ENCODE measurements at regions of chr11 and their contacts with region 1.

Region 1: GRCh38 chr11:62705880-62706849 is 1.1 kb downstream of the BSCL2 start:
- DNase-seq: peak; percentile 97
- ATAC-seq: peak; percentile 77
- H3K4me3 Mint-ChIP-seq: peak overlapping the region; percentile 84
- H3K27ac Mint-ChIP-seq: peak overlapping the region; percentile 77
- H3K4me1 Mint-ChIP-seq: peaks cover 43% of the 10 kb centered on the region
- H3K27me3 Mint-ChIP-seq: no peaks in the 10 kb centered on the region
- CTCF ChIP-seq: no peak

Region 2: GRCh38 chr11:62280452-62280851 is 425.7 kb before region 1 on chr11:
- CTCF ChIA-PET with region 1: no interaction called
- POLR2A ChIA-PET with region 1: no interaction called
- intact Hi-C with region 1: no loop called
- DNase-seq: no peak
- ATAC-seq: no peak
- H3K4me3 Mint-ChIP-seq: no peak overlapping the region
- H3K27ac Mint-ChIP-seq: no peak overlapping the region
- H3K4me1 Mint-ChIP-seq: no peaks in the 10 kb centered on the region
- H3K27me3 Mint-ChIP-seq: peaks cover 4% of the 10 kb centered on the region
- CTCF ChIP-seq: no peak

Region 3: DNA sequence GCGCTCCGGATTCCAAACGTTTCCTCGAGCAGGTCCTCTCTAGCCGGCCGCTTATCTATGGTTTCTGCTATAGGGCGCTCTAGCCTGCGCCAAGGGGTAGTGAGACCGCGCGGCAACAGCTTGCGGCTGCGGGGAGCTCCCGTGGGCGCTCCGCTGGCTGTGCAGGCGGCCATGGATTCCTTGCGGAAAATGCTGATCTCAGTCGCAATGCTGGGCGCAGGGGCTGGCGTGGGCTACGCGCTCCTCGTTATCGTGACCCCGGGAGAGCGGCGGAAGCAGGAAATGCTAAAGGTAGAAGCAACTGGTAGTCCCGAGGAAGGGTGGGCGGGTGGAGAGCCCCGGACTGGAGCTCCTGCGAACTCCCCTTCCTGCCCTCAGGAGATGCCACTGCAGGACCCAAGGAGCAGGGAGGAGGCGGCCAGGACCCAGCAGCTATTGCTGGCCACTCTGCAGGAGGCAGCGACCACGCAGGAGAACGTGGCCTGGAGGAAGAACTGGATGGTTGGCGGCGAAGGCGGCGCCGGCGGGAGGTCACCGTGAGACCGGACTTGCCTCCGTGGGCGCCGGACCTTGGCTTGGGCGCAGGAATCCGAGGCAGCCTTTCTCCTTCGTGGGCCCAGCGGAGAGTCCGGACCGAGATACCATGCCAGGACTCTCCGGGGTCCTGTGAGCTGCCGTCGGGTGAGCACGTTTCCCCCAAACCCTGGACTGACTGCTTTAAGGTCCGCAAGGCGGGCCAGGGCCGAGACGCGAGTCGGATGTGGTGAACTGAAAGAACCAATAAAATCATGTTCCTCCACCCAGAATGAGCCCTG is 34.4 kb before region 1 on chr11 and contains the starts of genes LBHD1 and UQCC3:
- CTCF ChIA-PET with region 1: interaction called, 3 read pairs
- POLR2A ChIA-PET with region 1: interaction called, 13 read pairs
- intact Hi-C with region 1: no loop called
- DNase-seq: peak; percentile 96
- ATAC-seq: peak; percentile 91
- H3K4me3 Mint-ChIP-seq: peak within 1 kb of the TSS; percentile 91
- H3K27ac Mint-ChIP-seq: peak within 1 kb of the TSS; percentile 98
- H3K4me1 Mint-ChIP-seq: peaks cover 41% of the 10 kb centered on the region
- H3K27me3 Mint-ChIP-seq: no peaks in the 10 kb centered on the region
- CTCF ChIP-seq: no peak
- total RNA-seq, gene LBHD1: 12.0 to 12.9 TPM
- total RNA-seq, gene UQCC3: 4.7 TPM

Region 4: GRCh38 chr11:62678770-62679696 is 27.1 kb before region 1 on chr11 and contains the start of gene UBXN1:
- CTCF ChIA-PET with region 1: interaction called, 7 read pairs
- POLR2A ChIA-PET with region 1: interaction called, 15 read pairs
- intact Hi-C with region 1: no loop called
- DNase-seq: peak; percentile 94
- ATAC-seq: peak; percentile 76
- H3K4me3 Mint-ChIP-seq: peak within 1 kb of the TSS; percentile 86
- H3K27ac Mint-ChIP-seq: peak within 1 kb of the TSS; percentile 93
- H3K4me1 Mint-ChIP-seq: peaks cover 29% of the 10 kb centered on the region
- H3K27me3 Mint-ChIP-seq: no peaks in the 10 kb centered on the region
- CTCF ChIP-seq: no peak
- total RNA-seq, gene UBXN1: 104 to 120 TPM

Region 5: GRCh38 chr11:62694455-62695167 is 11.6 kb before region 1 on chr11:
- CTCF ChIA-PET with region 1: interaction called, 16 read pairs
- POLR2A ChIA-PET with region 1: interaction called, 5 read pairs
- intact Hi-C with region 1: no loop called
- DNase-seq: peak; percentile 87
- ATAC-seq: peak; percentile 84
- H3K4me3 Mint-ChIP-seq: no peak overlapping the region
- H3K27ac Mint-ChIP-seq: no peak overlapping the region
- H3K4me1 Mint-ChIP-seq: peaks cover 7% of the 10 kb centered on the region
- H3K27me3 Mint-ChIP-seq: no peaks in the 10 kb centered on the region
- CTCF ChIP-seq: peak; percentile 92

Region 6: DNA sequence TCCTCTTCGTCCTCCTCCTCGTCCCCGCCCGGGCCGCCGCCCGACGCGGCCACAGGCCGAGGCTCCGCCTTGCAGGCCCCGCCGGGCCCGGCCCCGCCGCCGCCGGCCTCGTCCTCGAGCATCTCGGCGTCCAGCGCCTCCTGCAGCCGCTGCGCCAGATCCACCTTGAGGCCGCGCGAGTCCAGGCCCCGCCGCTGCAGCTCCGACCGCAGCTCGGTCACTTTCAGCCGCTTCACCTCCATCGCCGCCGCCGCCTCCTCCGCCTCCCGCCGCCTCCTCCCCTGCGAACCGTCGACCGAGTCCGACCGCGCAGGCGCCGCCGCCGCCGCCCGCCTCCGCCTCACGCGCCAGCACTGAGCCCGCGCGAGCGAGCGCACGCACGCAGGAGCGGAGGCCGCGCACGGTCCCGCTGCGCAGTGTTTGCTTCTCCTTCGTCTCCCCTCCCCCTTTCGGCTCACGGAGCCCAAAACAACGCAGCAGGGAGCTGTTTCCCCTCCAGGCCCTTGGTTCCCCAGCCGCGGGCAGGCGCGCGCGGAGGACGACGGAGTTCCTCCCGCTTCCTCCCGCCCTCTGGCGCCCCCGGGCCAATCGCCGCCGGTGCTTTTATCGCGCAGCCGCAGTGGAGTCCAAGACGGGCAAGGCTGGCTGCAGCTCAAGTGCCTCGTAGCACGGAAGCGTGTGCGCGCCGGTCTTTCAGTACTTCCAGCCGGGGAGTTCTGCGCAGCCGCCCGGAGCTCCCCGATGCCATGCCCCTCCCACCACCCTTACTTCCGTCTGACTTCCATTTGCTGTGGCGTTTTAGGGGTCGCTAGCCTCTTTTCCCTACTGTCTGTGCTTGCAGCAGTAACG is 21.0 kb after region 1 on chr11 and contains the start of gene HNRNPUL2:
- CTCF ChIA-PET with region 1: interaction called, 4 read pairs
- POLR2A ChIA-PET with region 1: interaction called, 20 read pairs
- intact Hi-C with region 1: no loop called
- DNase-seq: peak; percentile 98
- ATAC-seq: peak; percentile 92
- H3K4me3 Mint-ChIP-seq: peak within 1 kb of the TSS; percentile 95
- H3K27ac Mint-ChIP-seq: peak within 1 kb of the TSS; percentile 99
- H3K4me1 Mint-ChIP-seq: peaks cover 43% of the 10 kb centered on the region
- H3K27me3 Mint-ChIP-seq: no peaks in the 10 kb centered on the region
- CTCF ChIP-seq: no peak
- total RNA-seq, gene HNRNPUL2: 54.9 to 58.6 TPM

Region 7: GRCh38 chr11:62753736-62754603 is 47.8 kb after region 1 on chr11 and contains the start of gene ZBTB3:
- CTCF ChIA-PET with region 1: interaction called, 3 read pairs
- POLR2A ChIA-PET with region 1: interaction called, 11 read pairs
- intact Hi-C with region 1: no loop called
- DNase-seq: peak; percentile 99
- ATAC-seq: peak; percentile 97
- H3K4me3 Mint-ChIP-seq: peak within 1 kb of the TSS; percentile 99
- H3K27ac Mint-ChIP-seq: peak within 1 kb of the TSS; percentile 99
- H3K4me1 Mint-ChIP-seq: peaks cover 26% of the 10 kb centered on the region
- H3K27me3 Mint-ChIP-seq: no peaks in the 10 kb centered on the region
- CTCF ChIP-seq: no peak
- total RNA-seq, gene ZBTB3: 9.8 to 11.8 TPM

Measured in activated CD8-positive, alpha-beta T cell treated with anti-CD3 and anti-CD28 coated beads for 36 hours (primary cell).